ENCODE measurements at regions of chr7 and their contacts with region 1.

Region 1: GRCh38 chr7:116569737-116570136 is 44.9 kb downstream of the CAV1 start:
- DNase-seq: peak; percentile 94
- H3K4me3 ChIP-seq: no peak overlapping the region
- H3K27me3 ChIP-seq: no peaks in the 10 kb centered on the region
- CTCF ChIP-seq: no peak

Region 2: GRCh38 chr7:116395125-116395791 is 174.5 kb before region 1 on chr7:
- CTCF ChIA-PET with region 1: no interaction called
- POLR2A ChIA-PET with region 1: no interaction called
- DNase-seq: peak; percentile 63
- H3K4me3 ChIP-seq: no peak overlapping the region
- H3K27me3 ChIP-seq: no peaks in the 10 kb centered on the region
- CTCF ChIP-seq: no peak

Region 3: DNA sequence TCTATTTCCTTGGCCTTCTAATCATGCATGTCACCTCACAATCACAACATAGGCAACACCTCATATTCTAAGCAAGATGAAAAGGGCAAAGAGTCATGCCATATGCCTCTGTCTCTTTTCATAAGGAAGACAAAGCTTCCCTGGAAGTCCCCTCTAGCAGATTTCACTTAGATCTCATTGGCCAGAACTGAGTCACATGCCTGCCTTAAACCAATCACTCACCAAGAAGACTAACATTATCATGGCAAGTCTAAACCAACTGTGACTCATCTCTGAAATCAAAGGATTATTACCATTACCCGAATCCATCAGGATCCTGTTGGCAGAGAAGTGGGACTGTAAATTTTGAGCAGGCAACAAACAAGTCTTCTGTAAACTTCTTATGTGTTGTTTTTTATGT is 17.1 kb before region 1 on chr7:
- CTCF ChIA-PET with region 1: interaction called, 3 read pairs
- POLR2A ChIA-PET with region 1: interaction called, 14 read pairs
- DNase-seq: no peak
- H3K4me3 ChIP-seq: no peak overlapping the region
- H3K27me3 ChIP-seq: no peaks in the 10 kb centered on the region
- CTCF ChIP-seq: no peak